Transverse colon (tissue), 4 donors: ENCODE measurements at regions of chr2 and their contacts with region 1.

Region 1: GRCh38 chr2:8580316-8581233 is 101.3 kb upstream of the ID2 start:
- DNase-seq: no peak
- H3K4me3 ChIP-seq: no peak overlapping the region
- H3K27ac ChIP-seq: peak overlapping the region in 1 of 4 donors; percentile 8
- H3K4me1 ChIP-seq: peaks cover 6 to 37% (median 27%) of the 10 kb centered on the region in 4 donors
- H3K27me3 ChIP-seq: no peaks in the 10 kb centered on the region
- CTCF ChIP-seq: no peak
- EP300 ChIP-seq: no peak
- POLR2A ChIP-seq: no peak

Region 2: GRCh38 chr2:7655629-7656028 is 924.9 kb before region 1 on chr2:
- in situ Hi-C with region 1: no loop called
- intact Hi-C with region 1: loop called (anchors 2 kb)
- DNase-seq: no peak
- H3K4me3 ChIP-seq: no peak overlapping the region
- H3K27ac ChIP-seq: no peak overlapping the region
- H3K4me1 ChIP-seq: no peaks in the 10 kb centered on the region
- H3K27me3 ChIP-seq: no peaks in the 10 kb centered on the region
- CTCF ChIP-seq: no peak
- EP300 ChIP-seq: no peak
- POLR2A ChIP-seq: no peak

Region 3: GRCh38 chr2:9693211-9693520 is 1112.6 kb after region 1 on chr2:
- in situ Hi-C with region 1: no loop called
- intact Hi-C with region 1: no loop called
- DNase-seq: no peak
- H3K4me3 ChIP-seq: no peak overlapping the region
- H3K27ac ChIP-seq: peak overlapping the region in 3 of 4 donors; percentile 31 to 44 (median 44)
- H3K4me1 ChIP-seq: peaks cover 0 to 10% (median 7%) of the 10 kb centered on the region in 4 donors
- H3K27me3 ChIP-seq: no peaks in the 10 kb centered on the region
- CTCF ChIP-seq: no peak
- EP300 ChIP-seq: no peak
- POLR2A ChIP-seq: no peak